Naive thymus-derived CD4-positive, alpha-beta T cell (primary cell): ENCODE measurements at regions of chr1 and their contacts with region 1.

Region 1: DNA sequence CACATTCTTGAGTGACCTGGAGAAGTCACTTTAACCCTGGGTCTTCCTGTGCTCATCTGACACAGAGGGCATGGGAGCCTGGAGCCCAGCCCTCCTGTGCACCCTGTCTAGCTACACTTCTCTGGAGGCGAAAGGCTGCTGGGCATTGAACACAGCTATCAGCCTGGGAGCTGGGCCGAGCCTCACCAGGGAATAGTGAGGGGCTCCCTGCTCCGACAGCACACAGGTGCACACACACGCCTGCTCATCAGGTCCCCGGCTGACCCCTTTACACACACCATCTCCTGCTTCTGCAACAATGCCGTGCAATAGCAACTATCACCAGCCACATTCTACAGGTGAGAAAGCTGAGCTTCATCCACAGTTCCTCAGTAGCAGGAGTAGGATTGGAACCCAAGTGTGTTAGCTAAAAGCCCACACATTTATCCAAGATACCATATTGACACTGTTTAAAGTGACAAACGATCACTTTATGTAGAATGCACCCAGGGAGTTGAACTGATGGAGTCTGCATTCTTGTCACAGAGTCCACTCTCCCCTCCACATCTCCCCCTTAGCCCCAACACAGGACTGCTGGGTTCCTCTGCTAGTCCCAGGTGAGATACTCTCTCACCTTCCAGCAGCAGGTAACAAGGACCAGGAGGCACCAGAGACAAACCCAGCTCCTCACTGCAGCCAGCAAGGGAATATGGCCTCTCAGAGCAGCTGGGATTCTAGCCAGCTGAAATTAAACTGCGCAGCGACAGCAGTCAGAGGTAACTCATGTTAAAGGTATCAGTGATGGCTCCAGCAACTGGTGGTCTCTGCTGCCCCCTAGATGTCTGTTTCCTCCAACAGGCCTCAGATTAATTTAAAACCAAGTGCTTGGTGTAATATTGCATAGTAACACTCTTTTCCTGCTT is 18.3 kb upstream of the CAPN8 start:
- DNase-seq: peak in 8 of 9 donors; percentile 26 to 69 (median 50)
- ATAC-seq: peak; percentile 81
- H3K4me3 ChIP-seq: no peak overlapping the region
- H3K4me3 Mint-ChIP-seq: no peak overlapping the region
- H3K27ac ChIP-seq: no peak overlapping the region
- H3K27ac Mint-ChIP-seq: no peak overlapping the region
- H3K4me1 ChIP-seq: no peaks in the 10 kb centered on the region
- H3K4me1 Mint-ChIP-seq: no peaks in the 10 kb centered on the region
- H3K27me3 ChIP-seq: no peaks in the 10 kb centered on the region
- H3K27me3 Mint-ChIP-seq: peaks cover 0 to 30% (median 6%) of the 10 kb centered on the region in 5 donors

Region 2: DNA sequence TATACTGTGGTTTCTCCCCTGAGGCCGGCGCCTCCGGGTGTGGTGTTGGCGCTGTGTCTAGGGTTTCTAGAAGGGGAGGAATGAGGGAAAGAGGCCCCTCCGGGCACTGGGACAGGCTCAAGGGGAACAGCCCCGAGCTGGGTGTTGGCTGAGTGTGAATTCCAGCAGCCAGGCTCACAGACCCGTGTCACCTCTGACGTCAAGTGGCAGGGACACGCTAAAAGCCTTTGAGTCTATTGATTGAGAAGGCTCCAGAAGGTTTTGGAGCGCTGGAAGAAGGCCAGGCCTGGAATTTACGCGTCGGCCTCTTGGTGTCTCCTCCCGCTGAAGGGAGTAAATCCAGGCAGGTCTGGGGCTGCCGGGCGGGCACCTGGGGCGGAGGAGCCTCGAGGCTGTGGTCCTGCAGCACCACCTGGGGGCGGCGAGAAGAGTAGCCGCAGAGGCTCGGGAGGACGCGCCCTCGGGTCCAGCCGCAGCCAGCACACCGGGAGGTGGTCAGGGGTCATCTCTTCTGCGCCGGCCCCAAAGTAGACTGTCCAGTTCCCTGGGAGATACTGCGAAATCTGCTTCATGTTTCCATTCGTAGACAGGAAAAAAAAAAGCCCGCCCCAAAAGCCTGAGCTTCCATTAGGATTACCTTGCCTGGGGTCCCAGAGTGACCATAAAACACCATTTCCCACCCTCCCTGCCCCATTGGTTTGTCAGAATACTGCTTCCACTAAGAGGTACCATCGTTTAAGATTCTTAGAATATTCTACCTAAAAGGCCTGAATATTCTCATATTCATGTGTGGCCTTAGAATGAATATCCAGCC is 602.4 kb before region 1 on chr1:
- CTCF ChIA-PET with region 1: interaction called, 3 read pairs
- POLR2A ChIA-PET with region 1: no interaction called
- intact Hi-C with region 1: loop called in 1 of 2 experiments (anchors 1 kb)
- DNase-seq: peak; percentile 54 to 79 (median 65)
- ATAC-seq: peak; percentile 90
- H3K4me3 ChIP-seq: peak overlapping the region; percentile 57
- H3K4me3 Mint-ChIP-seq: peak overlapping the region; percentile 34 to 77 (median 58)
- H3K27ac ChIP-seq: peak overlapping the region; percentile 39
- H3K27ac Mint-ChIP-seq: peak overlapping the region in 1 of 9 donors; percentile 51
- H3K4me1 ChIP-seq: no peaks in the 10 kb centered on the region
- H3K4me1 Mint-ChIP-seq: no peaks in the 10 kb centered on the region
- H3K27me3 ChIP-seq: no peaks in the 10 kb centered on the region
- H3K27me3 Mint-ChIP-seq: peaks cover 2 to 9% (median 4%) of the 10 kb centered on the region in 5 donors

Region 3: DNA sequence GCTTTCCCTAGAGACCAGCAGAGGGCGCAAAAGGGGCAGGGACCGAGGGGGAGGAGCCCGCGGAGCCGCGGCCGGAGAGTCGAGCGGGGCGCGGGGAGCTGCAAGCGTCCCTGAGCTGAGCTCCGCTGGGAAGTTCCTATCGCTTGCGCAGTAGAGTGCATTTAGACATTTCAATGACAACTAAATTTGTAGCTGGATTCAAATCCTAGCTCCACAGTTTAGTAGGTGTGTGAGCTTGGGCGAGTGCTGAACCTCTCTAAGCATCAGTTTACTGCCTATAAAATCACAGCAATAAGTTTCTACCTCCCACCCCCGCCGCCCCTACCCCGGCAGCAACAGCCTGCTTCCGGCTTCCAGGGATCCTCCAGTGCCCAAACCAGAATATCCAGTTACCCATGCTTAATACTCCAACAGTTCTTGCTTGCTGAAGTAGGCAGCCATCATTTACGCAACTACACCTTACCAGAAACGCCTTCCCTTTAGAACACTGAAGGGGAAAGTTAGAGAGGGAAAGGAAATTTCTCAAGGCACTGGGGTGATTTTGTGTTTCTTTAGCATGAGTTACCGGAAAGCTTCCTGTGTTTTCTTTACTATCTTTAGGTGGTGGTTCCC is 549.9 kb before region 1 on chr1:
- CTCF ChIA-PET with region 1: interaction called, 21 read pairs
- POLR2A ChIA-PET with region 1: no interaction called
- intact Hi-C with region 1: loop called (anchors 1 kb)
- DNase-seq: peak; percentile 59 to 84 (median 73)
- ATAC-seq: peak; percentile 92
- H3K4me3 ChIP-seq: peak overlapping the region; percentile 41
- H3K4me3 Mint-ChIP-seq: peak overlapping the region; percentile 51 to 84 (median 74)
- H3K27ac ChIP-seq: no peak overlapping the region
- H3K27ac Mint-ChIP-seq: peak overlapping the region in 1 of 9 donors; percentile 41
- H3K4me1 ChIP-seq: peaks cover 4 to 12% of the 10 kb centered on the region in 2 donors
- H3K4me1 Mint-ChIP-seq: peaks cover 13 to 31% (median 22%) of the 10 kb centered on the region in 7 donors
- H3K27me3 ChIP-seq: no peaks in the 10 kb centered on the region
- H3K27me3 Mint-ChIP-seq: peaks cover 0 to 68% (median 5%) of the 10 kb centered on the region in 5 donors

Region 4: GRCh38 chr1:223486365-223486764 is 197.5 kb before region 1 on chr1:
- CTCF ChIA-PET with region 1: no interaction called
- POLR2A ChIA-PET with region 1: no interaction called
- intact Hi-C with region 1: loop called in 1 of 2 experiments (anchors 1 kb)
- DNase-seq: peak in 2 of 9 donors; percentile 5 to 19
- ATAC-seq: no peak
- H3K4me3 ChIP-seq: no peak overlapping the region
- H3K4me3 Mint-ChIP-seq: no peak overlapping the region
- H3K27ac ChIP-seq: no peak overlapping the region
- H3K27ac Mint-ChIP-seq: peak overlapping the region in 1 of 9 donors; percentile 14
- H3K4me1 ChIP-seq: no peaks in the 10 kb centered on the region
- H3K4me1 Mint-ChIP-seq: peaks cover 0 to 23% (median 9%) of the 10 kb centered on the region in 7 donors
- H3K27me3 ChIP-seq: no peaks in the 10 kb centered on the region
- H3K27me3 Mint-ChIP-seq: peaks cover 0 to 17% (median 0%) of the 10 kb centered on the region in 5 donors